HepG2 (cell line): ENCODE measurements at regions of chr3 and their contacts with region 1.

Region 1: GRCh38 chr3:50321336-50322114 is 1.0 kb downstream of the HYAL2 start:
- DNase-seq: peak; percentile 90
- ATAC-seq: peak; percentile 73
- H3K4me3 ChIP-seq: peak overlapping the region; percentile 81 to 91 (median 85); a peak in 5 of 6 replicates
- H3K27ac ChIP-seq: peak overlapping the region; percentile 100
- H3K4me1 ChIP-seq: peaks cover 79% of the 10 kb centered on the region
- H3K27me3 ChIP-seq: no peaks in the 10 kb centered on the region; a peak in 1 of 5 replicates
- CTCF ChIP-seq: peak; percentile 81
- EP300 ChIP-seq: peak in 1 of 2 experiments; percentile 64; a peak in 1 of 4 replicates
- POLR2A ChIP-seq: no peak; a peak in 1 of 4 replicates
- RAD21 ChIP-seq: peak; percentile 63

Region 2: DNA sequence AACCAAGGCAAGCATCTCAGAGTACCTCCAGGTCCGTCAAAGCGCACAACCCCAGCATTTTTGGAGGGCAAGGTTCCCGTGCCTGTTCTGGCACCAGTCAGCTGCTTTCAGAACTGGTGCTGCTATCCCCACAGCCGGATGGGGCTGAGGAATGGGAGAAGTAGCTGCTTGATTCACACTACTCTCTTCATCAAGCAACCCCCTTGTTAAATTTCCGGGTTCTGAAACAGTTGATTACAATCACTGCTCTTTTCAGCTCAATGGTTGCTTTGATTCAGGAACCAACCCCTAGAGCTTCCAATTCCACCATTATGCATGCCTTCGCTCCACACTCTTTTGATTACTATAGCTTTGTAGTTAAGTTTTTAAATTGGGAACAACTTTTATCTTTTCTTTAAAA is 495.5 kb before region 1 on chr3:
- CTCF ChIA-PET with region 1: no interaction called
- POLR2A ChIA-PET with region 1: no interaction called
- in situ Hi-C with region 1: no loop called
- intact Hi-C with region 1: no loop called
- DNase-seq: no peak
- ATAC-seq: no peak
- H3K4me3 ChIP-seq: no peak overlapping the region
- H3K27ac ChIP-seq: no peak overlapping the region
- H3K4me1 ChIP-seq: no peaks in the 10 kb centered on the region
- H3K27me3 ChIP-seq: no peaks in the 10 kb centered on the region
- CTCF ChIP-seq: no peak
- EP300 ChIP-seq: no peak
- POLR2A ChIP-seq: no peak
- RAD21 ChIP-seq: no peak

Region 3: DNA sequence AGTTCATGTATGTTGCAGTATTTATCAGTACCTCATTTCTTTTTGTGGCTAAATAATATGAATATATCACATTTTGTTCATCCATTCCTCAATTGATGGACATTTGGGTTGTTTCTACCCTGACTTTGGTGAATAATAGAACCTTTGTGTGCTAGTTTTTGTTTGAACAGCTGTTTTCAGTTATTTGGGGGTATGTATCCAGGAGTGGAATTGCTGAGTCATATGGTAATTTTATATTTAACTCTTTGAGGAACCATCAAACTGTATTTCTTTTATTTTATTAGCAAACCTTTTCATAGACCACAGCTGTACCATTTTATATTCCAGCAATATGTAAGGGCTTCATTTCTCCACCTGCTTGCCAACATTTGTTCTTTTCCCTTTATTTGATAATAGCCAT is 271.2 kb before region 1 on chr3:
- CTCF ChIA-PET with region 1: no interaction called
- POLR2A ChIA-PET with region 1: no interaction called
- in situ Hi-C with region 1: no loop called
- intact Hi-C with region 1: no loop called
- DNase-seq: peak; percentile 34
- ATAC-seq: no peak
- H3K4me3 ChIP-seq: no peak overlapping the region
- H3K27ac ChIP-seq: no peak overlapping the region
- H3K4me1 ChIP-seq: peaks cover 11% of the 10 kb centered on the region
- H3K27me3 ChIP-seq: no peaks in the 10 kb centered on the region
- CTCF ChIP-seq: no peak
- EP300 ChIP-seq: no peak
- POLR2A ChIP-seq: no peak
- RAD21 ChIP-seq: no peak

Region 4: DNA sequence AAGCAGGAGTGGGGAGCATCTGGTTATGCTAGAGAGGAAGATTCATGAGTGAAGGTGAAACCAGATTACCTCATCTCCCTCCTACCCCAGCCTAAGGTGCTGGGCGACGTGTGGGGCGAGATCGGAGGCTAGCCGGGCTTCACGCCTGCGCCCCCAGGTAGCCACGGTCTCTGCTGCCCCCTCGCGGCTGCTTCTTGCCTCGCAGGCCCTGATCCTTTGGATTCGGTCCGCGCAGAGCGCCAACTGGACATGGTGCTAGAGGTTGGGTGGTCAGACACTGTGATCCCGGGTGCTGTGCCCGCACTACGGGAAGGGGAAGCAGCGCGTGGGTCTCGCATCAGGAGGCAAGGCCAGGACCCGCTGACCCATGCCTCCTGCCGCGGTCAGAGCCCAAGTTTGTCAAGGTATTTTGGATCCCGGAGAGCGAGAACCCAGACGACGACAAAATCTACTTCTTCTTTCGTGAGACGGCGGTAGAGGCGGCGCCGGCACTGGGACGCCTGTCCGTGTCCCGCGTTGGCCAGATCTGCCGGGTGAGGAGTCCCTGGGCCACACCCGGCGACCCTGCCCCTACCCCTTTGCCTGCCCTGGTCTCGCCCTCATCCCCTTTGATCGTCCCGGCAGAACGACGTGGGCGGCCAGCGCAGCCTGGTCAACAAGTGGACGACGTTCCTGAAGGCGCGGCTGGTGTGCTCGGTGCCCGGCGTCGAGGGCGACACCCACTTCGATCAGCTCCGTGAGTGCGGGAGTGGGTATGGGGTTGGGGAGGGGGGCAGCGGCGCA is 48.4 kb before region 1 on chr3:
- CTCF ChIA-PET with region 1: interaction called, 10 read pairs
- POLR2A ChIA-PET with region 1: interaction called, 11 read pairs
- in situ Hi-C with region 1: no loop called
- intact Hi-C with region 1: loop called (anchors 1 kb)
- DNase-seq: peak; percentile 64
- ATAC-seq: peak; percentile 13
- H3K4me3 ChIP-seq: no peak overlapping the region
- H3K27ac ChIP-seq: peak overlapping the region; percentile 88
- H3K4me1 ChIP-seq: peaks cover 54% of the 10 kb centered on the region
- H3K27me3 ChIP-seq: no peaks in the 10 kb centered on the region; a peak in 1 of 5 replicates
- CTCF ChIP-seq: peak; percentile 99
- EP300 ChIP-seq: 0 out of 4 replicates have a peak, but pooled peaks of 1 of the 2 experiments have one; percentile 26
- POLR2A ChIP-seq: no peak
- RAD21 ChIP-seq: peak; percentile 99

Region 5: GRCh38 chr3:50292159-50293078 is 29.1 kb before region 1 on chr3 and contains the start of gene IFRD2:
- CTCF ChIA-PET with region 1: interaction called, 4 read pairs
- POLR2A ChIA-PET with region 1: interaction called, 222 read pairs
- in situ Hi-C with region 1: no loop called
- intact Hi-C with region 1: no loop called
- DNase-seq: peak; percentile 95
- ATAC-seq: peak; percentile 91
- H3K4me3 ChIP-seq: peak within 1 kb of the TSS; percentile 60 to 92 (median 85)
- H3K27ac ChIP-seq: peak within 1 kb of the TSS; percentile 73
- H3K4me1 ChIP-seq: peaks cover 33% of the 10 kb centered on the region
- H3K27me3 ChIP-seq: no peaks in the 10 kb centered on the region
- CTCF ChIP-seq: peak; percentile 53
- EP300 ChIP-seq: peak in 1 of 2 experiments; percentile 44; a peak in 2 of 4 replicates
- POLR2A ChIP-seq: peak in 1 of 2 experiments; percentile 73; a peak in 2 of 4 replicates
- RAD21 ChIP-seq: peak; percentile 31; the same call in 1 of the 2 replicates
- total RNA-seq, gene IFRD2: 81.4 and 96.1 TPM in 2 replicates

Region 6: DNA sequence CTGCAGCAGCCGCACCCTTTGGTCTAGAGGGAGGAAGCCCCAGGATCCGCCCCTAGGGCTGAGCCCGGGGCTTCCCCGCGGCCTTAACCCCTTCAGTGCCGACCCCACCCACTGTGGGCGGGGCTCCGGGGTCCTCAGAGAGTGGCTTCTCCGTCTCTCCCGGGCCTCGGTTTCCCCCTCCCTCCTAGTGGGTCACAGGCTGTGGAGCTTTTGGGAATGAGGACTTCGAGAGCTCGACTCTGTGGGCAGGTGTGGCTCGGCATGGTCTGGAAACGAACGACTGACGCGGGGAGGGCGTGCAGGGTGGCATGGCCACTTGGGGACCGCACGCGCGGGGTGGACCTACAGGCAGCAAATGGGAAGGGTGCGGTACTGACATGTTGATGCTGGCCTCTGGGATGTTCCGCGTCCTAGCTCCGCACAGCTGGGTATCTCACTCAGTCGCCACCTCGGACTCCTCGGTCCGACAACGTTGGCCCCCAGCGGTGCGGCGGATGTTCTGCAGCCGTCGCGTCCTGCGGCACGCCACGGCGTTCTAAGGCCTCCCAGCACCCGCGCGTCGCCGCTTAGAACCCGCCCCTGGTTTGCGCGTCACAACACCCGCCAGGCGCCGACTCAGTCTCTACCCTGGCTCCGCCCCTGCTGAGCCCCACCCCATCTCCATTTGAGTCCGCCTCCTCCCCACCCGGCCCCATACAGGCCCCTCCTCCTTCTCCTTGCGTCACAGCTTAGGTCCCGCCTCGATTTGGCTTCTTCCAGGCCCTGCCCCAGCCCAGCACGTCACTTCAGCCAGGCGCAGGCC is 22.5 kb before region 1 on chr3 and contains the starts of genes HYAL3 and NAA80:
- CTCF ChIA-PET with region 1: interaction called, 15 read pairs
- POLR2A ChIA-PET with region 1: interaction called, 222 read pairs
- in situ Hi-C with region 1: no loop called
- intact Hi-C with region 1: loop called (anchors 1 kb)
- DNase-seq: no peak
- ATAC-seq: peak; percentile 53
- H3K4me3 ChIP-seq: peak within 1 kb of the TSS; percentile 66 to 91 (median 89)
- H3K27ac ChIP-seq: peak within 1 kb of the TSS; percentile 87
- H3K4me1 ChIP-seq: peaks cover 52% of the 10 kb centered on the region
- H3K27me3 ChIP-seq: no peaks in the 10 kb centered on the region; a peak in 1 of 5 replicates
- CTCF ChIP-seq: peak; percentile 54
- EP300 ChIP-seq: no peak
- POLR2A ChIP-seq: peak in 1 of 2 experiments; percentile 79; a peak in 2 of 4 replicates
- RAD21 ChIP-seq: peak; percentile 67; the same call in 1 of the 2 replicates
- total RNA-seq, gene HYAL3: 5.5 and 5.9 TPM in 2 replicates
- total RNA-seq, gene NAA80: 1.5 and 3.4 TPM in 2 replicates

Region 7: GRCh38 chr3:50337191-50337841 is 15.8 kb after region 1 on chr3:
- CTCF ChIA-PET with region 1: no interaction called
- POLR2A ChIA-PET with region 1: interaction called, 66 read pairs
- in situ Hi-C with region 1: no loop called
- intact Hi-C with region 1: no loop called
- DNase-seq: peak; percentile 98
- ATAC-seq: peak; percentile 89
- H3K4me3 ChIP-seq: peak overlapping the region; percentile 86 to 89 (median 88); a peak in 5 of 6 replicates
- H3K27ac ChIP-seq: peak overlapping the region; percentile 85
- H3K4me1 ChIP-seq: peaks cover 58% of the 10 kb centered on the region
- H3K27me3 ChIP-seq: peaks cover 1 to 2% of the 10 kb centered on the region in 2 experiments; a peak in 1 of 5 replicates
- CTCF ChIP-seq: peak; percentile 2; the same call in 1 of the 2 replicates
- EP300 ChIP-seq: no peak
- POLR2A ChIP-seq: peak in 1 of 2 experiments; percentile 61; a peak in 2 of 4 replicates
- RAD21 ChIP-seq: no peak; the same call in 1 of the 2 replicates

Region 8: GRCh38 chr3:50375249-50375931 is 53.9 kb after region 1 on chr3:
- CTCF ChIA-PET with region 1: no interaction called
- POLR2A ChIA-PET with region 1: no interaction called
- in situ Hi-C with region 1: no loop called
- intact Hi-C with region 1: no loop called
- DNase-seq: no peak
- ATAC-seq: peak; percentile 30
- H3K4me3 ChIP-seq: no peak overlapping the region
- H3K27ac ChIP-seq: no peak overlapping the region
- H3K4me1 ChIP-seq: peaks cover 15% of the 10 kb centered on the region
- H3K27me3 ChIP-seq: peaks cover 8 to 33% of the 10 kb centered on the region in 2 experiments; a peak in 4 of 5 replicates
- CTCF ChIP-seq: peak; percentile 46; the same call in 1 of the 2 replicates
- EP300 ChIP-seq: no peak
- POLR2A ChIP-seq: no peak
- RAD21 ChIP-seq: no peak

Region 9: GRCh38 chr3:50600841-50601591 is 279.5 kb after region 1 on chr3:
- CTCF ChIA-PET with region 1: no interaction called
- POLR2A ChIA-PET with region 1: no interaction called
- in situ Hi-C with region 1: no loop called
- intact Hi-C with region 1: no loop called
- DNase-seq: peak; percentile 90
- ATAC-seq: peak; percentile 80
- H3K4me3 ChIP-seq: peak overlapping the region; percentile 47 to 72 (median 49); a peak in 5 of 6 replicates
- H3K27ac ChIP-seq: peak overlapping the region; percentile 97
- H3K4me1 ChIP-seq: peaks cover 79% of the 10 kb centered on the region
- H3K27me3 ChIP-seq: no peaks in the 10 kb centered on the region
- CTCF ChIP-seq: peak; percentile 29; the same call in 1 of the 2 replicates
- EP300 ChIP-seq: peak in 1 of 2 experiments; percentile 74; a peak in 2 of 4 replicates
- POLR2A ChIP-seq: peak in 1 of 2 experiments; percentile 68; a peak in 2 of 4 replicates
- RAD21 ChIP-seq: no peak